Naive thymus-derived CD4-positive, alpha-beta T cell (primary cell): ENCODE measurements at regions of chr3 and their contacts with region 1.

Region 1: DNA sequence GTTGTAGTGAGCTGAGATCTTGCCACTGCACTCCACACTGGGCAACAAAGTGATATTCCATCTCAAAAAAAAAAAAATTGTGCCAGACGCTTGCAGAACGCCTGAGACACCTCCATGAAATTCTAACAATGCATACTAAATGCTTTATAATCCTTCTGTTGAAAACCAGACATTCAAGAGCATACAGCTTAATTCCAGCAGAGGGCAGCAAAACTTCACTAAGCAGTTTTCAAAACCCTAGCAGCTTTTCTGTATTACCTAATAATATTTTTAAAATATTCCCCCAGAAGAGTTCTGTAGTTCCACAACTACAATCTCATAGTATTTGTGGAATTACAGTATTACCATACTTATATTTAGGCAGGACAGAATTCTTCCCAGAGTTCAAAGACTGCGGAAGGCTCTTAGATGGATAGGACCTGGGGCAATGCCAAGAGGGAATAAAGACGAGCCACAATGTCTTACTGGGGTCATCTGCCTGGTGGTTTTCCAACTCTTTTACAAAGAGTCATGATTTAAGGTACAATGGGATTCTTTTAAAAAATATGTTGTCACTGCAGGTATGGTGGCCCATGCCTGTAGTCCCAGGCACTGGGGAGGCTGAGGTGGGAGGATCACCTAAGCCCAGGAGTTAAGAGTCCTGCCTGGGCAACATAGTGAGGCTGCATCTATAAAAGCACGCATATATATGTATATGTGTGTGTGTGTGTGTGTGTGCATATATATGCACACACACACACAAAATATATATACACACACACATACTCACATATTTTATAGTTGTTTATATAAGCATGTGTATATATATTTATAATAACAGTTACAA is 19.6 kb upstream of the TASOR start:
- DNase-seq: peak in 7 of 9 donors; percentile 52 to 75 (median 67)
- ATAC-seq: peak; percentile 86
- H3K4me3 ChIP-seq: no peak overlapping the region
- H3K4me3 Mint-ChIP-seq: no peak overlapping the region
- H3K27ac ChIP-seq: no peak overlapping the region
- H3K27ac Mint-ChIP-seq: peak overlapping the region in 2 of 9 donors; percentile 1 to 22
- H3K4me1 ChIP-seq: peaks cover 3 to 11% of the 10 kb centered on the region in 2 donors
- H3K4me1 Mint-ChIP-seq: peaks cover 15 to 35% (median 24%) of the 10 kb centered on the region in 7 donors
- H3K27me3 ChIP-seq: no peaks in the 10 kb centered on the region
- H3K27me3 Mint-ChIP-seq: no peaks in the 10 kb centered on the region

Region 2: DNA sequence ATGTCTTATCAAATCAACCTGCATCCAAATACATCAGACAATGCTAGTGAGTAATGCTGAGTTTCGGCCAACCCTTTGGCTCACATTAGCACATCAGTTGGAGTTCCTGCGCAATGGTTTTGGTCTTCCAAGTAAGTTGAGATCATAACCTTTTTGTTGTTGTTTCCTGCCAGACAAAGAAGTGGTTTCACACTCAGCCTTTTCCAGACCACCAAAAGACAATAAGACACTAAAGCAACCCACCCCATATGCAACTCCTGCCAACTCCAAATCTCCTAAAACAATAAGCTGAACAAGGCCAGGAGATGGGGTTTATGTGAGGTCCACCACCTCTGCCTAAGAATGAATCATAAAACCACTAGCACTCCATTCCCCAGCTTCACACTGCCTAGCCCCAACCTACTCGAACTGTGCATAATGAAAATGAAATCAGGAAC is 411.4 kb before region 1 on chr3:
- CTCF ChIA-PET with region 1: no interaction called
- POLR2A ChIA-PET with region 1: no interaction called
- intact Hi-C with region 1: no loop called
- DNase-seq: peak in 1 of 9 donors; percentile 29
- ATAC-seq: no peak
- H3K4me3 ChIP-seq: no peak overlapping the region
- H3K4me3 Mint-ChIP-seq: peak overlapping the region in 1 of 10 donors; percentile 35
- H3K27ac ChIP-seq: no peak overlapping the region
- H3K27ac Mint-ChIP-seq: peak overlapping the region in 1 of 9 donors; percentile 70
- H3K4me1 ChIP-seq: no peaks in the 10 kb centered on the region
- H3K4me1 Mint-ChIP-seq: peaks cover 0 to 32% (median 0%) of the 10 kb centered on the region in 7 donors
- H3K27me3 ChIP-seq: no peaks in the 10 kb centered on the region
- H3K27me3 Mint-ChIP-seq: peaks cover 0 to 22% (median 15%) of the 10 kb centered on the region in 5 donors

Region 3: DNA sequence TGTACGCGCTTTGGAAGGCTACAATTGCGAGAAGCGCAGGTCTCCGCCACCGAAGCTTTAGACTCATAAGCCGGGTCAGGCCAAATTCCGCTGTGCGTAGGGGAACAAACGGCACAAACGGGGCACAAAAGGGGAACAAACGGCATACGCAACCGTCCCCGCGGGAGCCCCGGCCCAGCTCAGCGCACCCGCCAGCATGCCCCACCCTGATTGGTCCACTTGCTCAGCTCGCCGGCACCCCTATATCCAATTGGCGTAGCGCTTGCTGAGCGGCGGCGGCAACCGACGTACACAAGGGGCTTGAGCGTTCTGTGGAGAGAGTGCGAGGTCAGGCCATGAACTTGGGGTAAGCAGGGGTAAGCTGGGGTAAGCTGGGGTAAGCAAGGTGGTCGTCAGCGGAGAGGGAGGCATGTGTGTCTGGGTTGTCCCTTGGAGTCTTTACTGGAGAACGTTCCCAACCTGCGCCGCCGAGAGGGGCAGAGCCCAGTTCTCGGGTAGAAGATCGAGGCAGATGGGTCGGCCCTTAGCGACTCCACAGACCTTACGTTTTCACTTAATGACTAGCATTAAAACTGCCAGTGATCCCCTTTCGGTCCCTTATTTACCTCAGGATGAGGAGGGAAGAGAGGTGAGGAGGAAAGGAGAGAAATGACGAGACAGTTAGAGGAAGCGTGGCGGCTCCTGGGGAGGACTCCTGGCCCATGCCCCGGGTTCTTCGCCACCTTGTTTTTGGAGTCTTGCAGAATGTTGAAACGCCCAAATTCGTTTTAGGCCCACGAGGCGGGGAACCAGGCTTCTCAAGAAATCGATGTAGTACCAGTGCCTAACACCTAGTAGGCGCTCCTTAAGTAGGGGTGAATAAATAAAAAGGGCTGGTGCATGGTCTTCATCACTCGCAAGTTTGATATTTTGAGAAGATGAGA is 145.5 kb before region 1 on chr3 and contains the start of gene CCDC66:
- CTCF ChIA-PET with region 1: no interaction called
- POLR2A ChIA-PET with region 1: no interaction called
- intact Hi-C with region 1: loop called in 1 of 2 experiments (anchors 1 kb)
- DNase-seq: peak; percentile 85 to 95 (median 93)
- ATAC-seq: peak; percentile 96
- H3K4me3 ChIP-seq: peak within 1 kb of the TSS; percentile 96
- H3K4me3 Mint-ChIP-seq: peak within 1 kb of the TSS; percentile 91 to 100 (median 98)
- H3K27ac ChIP-seq: peak within 1 kb of the TSS; percentile 99
- H3K27ac Mint-ChIP-seq: peak within 1 kb of the TSS; percentile 93 to 100 (median 98)
- H3K4me1 ChIP-seq: peaks cover 9 to 17% of the 10 kb centered on the region in 2 donors
- H3K4me1 Mint-ChIP-seq: peaks cover 12 to 51% (median 38%) of the 10 kb centered on the region in 7 donors
- H3K27me3 ChIP-seq: no peaks in the 10 kb centered on the region
- H3K27me3 Mint-ChIP-seq: peaks cover 0 to 25% (median 0%) of the 10 kb centered on the region in 5 donors
- total RNA-seq, gene CCDC66: 38.6 to 115 (median 77.3) TPM

Region 4: GRCh38 chr3:56747150-56747549 is 44.4 kb after region 1 on chr3:
- CTCF ChIA-PET with region 1: interaction called, 13 read pairs
- POLR2A ChIA-PET with region 1: interaction called, 5 read pairs
- intact Hi-C with region 1: no loop called
- DNase-seq: no peak
- ATAC-seq: no peak
- H3K4me3 ChIP-seq: no peak overlapping the region
- H3K4me3 Mint-ChIP-seq: no peak overlapping the region
- H3K27ac ChIP-seq: no peak overlapping the region
- H3K27ac Mint-ChIP-seq: peak overlapping the region in 6 of 9 donors; percentile 33 to 87 (median 67)
- H3K4me1 ChIP-seq: peaks cover under 1 to 5% of the 10 kb centered on the region in 2 donors
- H3K4me1 Mint-ChIP-seq: peaks cover 21 to 53% (median 26%) of the 10 kb centered on the region in 7 donors
- H3K27me3 ChIP-seq: no peaks in the 10 kb centered on the region
- H3K27me3 Mint-ChIP-seq: no peaks in the 10 kb centered on the region

Region 5: GRCh38 chr3:56988458-56989168 is 285.9 kb after region 1 on chr3:
- CTCF ChIA-PET with region 1: interaction called, 155 read pairs
- POLR2A ChIA-PET with region 1: interaction called, 24 read pairs
- intact Hi-C with region 1: loop called (anchors 1 kb)
- DNase-seq: peak; percentile 45 to 76 (median 63)
- ATAC-seq: peak; percentile 85
- H3K4me3 ChIP-seq: no peak overlapping the region
- H3K4me3 Mint-ChIP-seq: peak overlapping the region in 5 of 10 donors; percentile 29 to 46 (median 42)
- H3K27ac ChIP-seq: no peak overlapping the region
- H3K27ac Mint-ChIP-seq: peak overlapping the region in 3 of 9 donors; percentile 28 to 81 (median 62)
- H3K4me1 ChIP-seq: peaks cover 3 to 9% of the 10 kb centered on the region in 2 donors
- H3K4me1 Mint-ChIP-seq: peaks cover 5 to 34% (median 18%) of the 10 kb centered on the region in 7 donors
- H3K27me3 ChIP-seq: no peaks in the 10 kb centered on the region
- H3K27me3 Mint-ChIP-seq: peaks cover 0 to 26% (median 5%) of the 10 kb centered on the region in 5 donors

Region 6: DNA sequence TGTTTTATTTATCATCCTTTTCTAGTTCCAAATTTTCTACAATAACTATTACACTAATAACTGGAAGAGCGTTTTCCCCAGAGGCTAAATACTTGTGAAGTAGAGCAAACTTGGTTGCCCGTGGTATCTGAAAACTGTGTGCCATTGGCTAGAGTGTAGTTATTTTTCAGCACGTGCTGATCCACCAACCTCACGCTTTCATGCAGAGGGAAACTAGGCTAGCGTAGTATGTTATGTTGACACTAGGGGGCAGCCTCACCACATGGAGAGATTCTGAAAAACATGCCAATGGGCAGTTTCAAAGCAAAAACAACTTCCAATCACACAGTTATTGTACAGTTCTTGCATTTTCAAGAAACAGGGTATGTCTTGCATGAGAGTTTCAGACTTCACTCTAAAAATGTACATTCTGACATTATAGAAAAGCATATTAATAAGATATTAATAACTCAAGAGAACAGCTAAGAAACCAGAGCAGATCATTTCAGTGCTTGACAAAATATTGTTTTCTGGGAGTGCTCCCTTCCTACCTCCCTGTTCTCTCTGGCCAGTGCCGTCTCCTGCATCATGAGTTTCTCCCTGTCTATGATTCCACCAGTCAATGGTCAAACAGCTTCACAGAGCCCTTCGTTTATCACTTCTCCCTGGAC is 397.5 kb after region 1 on chr3:
- CTCF ChIA-PET with region 1: no interaction called
- POLR2A ChIA-PET with region 1: no interaction called
- intact Hi-C with region 1: loop called in 1 of 2 experiments (anchors 1 kb)
- DNase-seq: peak; percentile 10 to 62 (median 44)
- ATAC-seq: peak; percentile 84
- H3K4me3 ChIP-seq: no peak overlapping the region
- H3K4me3 Mint-ChIP-seq: no peak overlapping the region
- H3K27ac ChIP-seq: no peak overlapping the region
- H3K27ac Mint-ChIP-seq: no peak overlapping the region
- H3K4me1 ChIP-seq: no peaks in the 10 kb centered on the region
- H3K4me1 Mint-ChIP-seq: peaks cover 0 to 6% (median 0%) of the 10 kb centered on the region in 7 donors
- H3K27me3 ChIP-seq: no peaks in the 10 kb centered on the region
- H3K27me3 Mint-ChIP-seq: peaks cover 0 to 6% (median 0%) of the 10 kb centered on the region in 5 donors